CD4-positive, alpha-beta memory T cell (primary cell): ENCODE measurements at regions of chr22 and their contacts with region 1.

Region 1: GRCh38 chr22:50525390-50526068 is at the start of gene SCO2:
- DNase-seq: peak; percentile 96 to 98 (median 98)
- H3K4me3 ChIP-seq: peak within 1 kb of the TSS; percentile 47 to 81
- H3K4me3 Mint-ChIP-seq: peak within 1 kb of the TSS; percentile 86 to 94 (median 92)
- H3K27ac ChIP-seq: peak within 1 kb of the TSS; percentile 96
- H3K27ac Mint-ChIP-seq: peak within 1 kb of the TSS; percentile 84 to 97 (median 94)
- H3K4me1 ChIP-seq: peaks cover 48% of the 10 kb centered on the region
- H3K4me1 Mint-ChIP-seq: peaks cover 14 to 39% (median 26%) of the 10 kb centered on the region in 4 donors
- H3K27me3 ChIP-seq: no peaks in the 10 kb centered on the region
- H3K27me3 Mint-ChIP-seq: no peaks in the 10 kb centered on the region
- total RNA-seq, gene SCO2: not detected

Region 2: GRCh38 chr22:50244420-50245213 is 280.9 kb before region 1 on chr22 and contains the start of gene TUBGCP6:
- CTCF ChIA-PET with region 1: interaction called, 5 read pairs
- POLR2A ChIA-PET with region 1: interaction called, 20 read pairs
- intact Hi-C with region 1: loop called (anchors 5 kb)
- DNase-seq: peak; percentile 89 to 93 (median 91)
- H3K4me3 ChIP-seq: peak within 1 kb of the TSS; percentile 37 to 99
- H3K4me3 Mint-ChIP-seq: peak within 1 kb of the TSS; percentile 95 to 100 (median 98)
- H3K27ac ChIP-seq: peak within 1 kb of the TSS; percentile 98
- H3K27ac Mint-ChIP-seq: peak within 1 kb of the TSS; percentile 90 to 100 (median 99)
- H3K4me1 ChIP-seq: peaks cover 69% of the 10 kb centered on the region
- H3K4me1 Mint-ChIP-seq: peaks cover 23 to 64% (median 37%) of the 10 kb centered on the region in 4 donors
- H3K27me3 ChIP-seq: no peaks in the 10 kb centered on the region
- H3K27me3 Mint-ChIP-seq: no peaks in the 10 kb centered on the region
- total RNA-seq, gene TUBGCP6: 132 to 133 TPM

Region 3: GRCh38 chr22:50399751-50400331 is 125.7 kb before region 1 on chr22:
- CTCF ChIA-PET with region 1: interaction called, 12 read pairs
- POLR2A ChIA-PET with region 1: interaction called, 3 read pairs
- intact Hi-C with region 1: no loop called
- DNase-seq: peak in 2 of 5 donors; percentile 12 to 15
- H3K4me3 ChIP-seq: no peak overlapping the region
- H3K4me3 Mint-ChIP-seq: no peak overlapping the region
- H3K27ac ChIP-seq: no peak overlapping the region
- H3K27ac Mint-ChIP-seq: peak overlapping the region in 6 of 7 donors; percentile 57 to 84 (median 76)
- H3K4me1 ChIP-seq: peaks cover 7% of the 10 kb centered on the region
- H3K4me1 Mint-ChIP-seq: peaks cover 13 to 28% (median 18%) of the 10 kb centered on the region in 4 donors
- H3K27me3 ChIP-seq: no peaks in the 10 kb centered on the region
- H3K27me3 Mint-ChIP-seq: no peaks in the 10 kb centered on the region

Region 4: DNA sequence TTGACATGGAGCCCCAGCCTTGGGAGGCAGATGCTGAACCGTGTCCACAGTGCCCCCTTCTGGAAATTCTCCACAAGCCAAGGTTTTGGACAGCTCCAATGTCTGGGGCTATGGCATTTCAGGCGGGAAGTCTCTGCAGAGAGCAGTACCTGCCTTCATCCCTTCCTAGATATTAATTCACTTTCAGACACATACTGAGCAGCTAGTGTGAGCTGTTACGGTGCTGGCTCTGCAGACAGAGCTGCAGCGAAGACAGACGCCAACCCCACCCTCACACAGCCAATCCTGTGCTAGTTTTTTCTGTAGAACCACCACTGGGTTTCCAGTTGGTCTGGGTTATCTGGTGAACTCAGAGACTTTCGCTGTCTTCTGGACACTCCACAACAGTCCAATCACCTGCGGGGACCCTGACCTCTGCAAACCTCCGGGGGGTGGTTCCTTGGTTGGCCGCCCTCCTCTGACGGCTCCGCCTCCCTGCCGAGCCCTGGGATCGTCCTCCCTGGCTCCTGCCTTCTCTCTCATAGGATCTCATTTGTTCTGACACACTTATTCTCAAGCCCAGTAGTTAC is 27.1 kb before region 1 on chr22:
- CTCF ChIA-PET with region 1: interaction called, 12 read pairs
- POLR2A ChIA-PET with region 1: interaction called, 21 read pairs
- intact Hi-C with region 1: no loop called
- DNase-seq: peak; percentile 66 to 69 (median 68)
- H3K4me3 ChIP-seq: no peak overlapping the region
- H3K4me3 Mint-ChIP-seq: no peak overlapping the region
- H3K27ac ChIP-seq: no peak overlapping the region
- H3K27ac Mint-ChIP-seq: peak overlapping the region in 1 of 7 donors; percentile 30
- H3K4me1 ChIP-seq: peaks cover 3% of the 10 kb centered on the region
- H3K4me1 Mint-ChIP-seq: peaks cover 0 to 5% (median under 1%) of the 10 kb centered on the region in 4 donors
- H3K27me3 ChIP-seq: no peaks in the 10 kb centered on the region
- H3K27me3 Mint-ChIP-seq: no peaks in the 10 kb centered on the region

Region 5: DNA sequence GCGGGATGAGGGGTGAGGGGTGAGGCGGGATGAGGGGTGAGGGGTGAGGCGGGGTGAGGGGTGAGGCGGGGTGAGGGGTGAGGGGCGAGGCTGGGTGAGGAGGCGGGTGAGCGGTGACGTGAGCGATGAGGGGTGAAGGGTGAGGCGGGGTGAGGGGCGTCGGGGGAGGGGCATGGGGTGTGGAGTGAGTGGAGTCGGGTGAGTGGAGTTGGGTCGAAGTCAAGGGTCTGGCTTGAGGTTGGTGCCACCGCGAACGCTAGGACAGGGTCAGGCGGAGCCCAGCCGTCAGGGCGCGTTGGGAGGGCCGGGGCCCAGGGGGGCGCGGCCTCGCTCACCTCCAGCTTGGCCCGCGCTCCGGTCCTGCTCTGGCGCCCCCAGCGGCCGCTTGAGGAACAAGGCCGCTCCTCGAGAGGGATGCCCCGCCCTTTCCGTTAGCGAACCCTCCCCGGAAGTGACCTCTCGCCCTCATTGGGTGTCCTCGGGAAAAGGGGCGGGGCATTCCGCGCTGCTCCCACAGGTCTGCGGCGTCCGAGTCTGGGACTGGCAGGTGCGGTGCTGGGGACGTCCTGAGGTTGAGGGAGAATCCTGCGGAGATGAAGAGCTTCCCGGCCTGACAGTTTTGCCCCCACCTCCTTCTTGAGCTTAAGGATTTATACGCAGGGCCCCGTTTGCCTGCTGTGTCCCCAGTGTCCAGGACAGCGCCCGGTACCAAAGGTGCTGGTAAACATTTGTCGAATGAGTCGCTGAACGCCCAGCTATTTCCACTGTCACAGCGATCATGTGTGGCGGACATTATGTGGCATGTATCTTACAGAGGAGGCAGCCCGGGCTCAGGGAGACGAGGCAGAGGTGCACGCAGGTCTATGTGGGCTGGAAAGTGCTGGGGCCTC is 37.2 kb after region 1 on chr22 and contains the start of gene SYCE3:
- CTCF ChIA-PET with region 1: interaction called, 33 read pairs
- POLR2A ChIA-PET with region 1: interaction called, 56 read pairs
- intact Hi-C with region 1: loop called (anchors 1 kb)
- DNase-seq: peak; percentile 94 to 97 (median 95)
- H3K4me3 ChIP-seq: peak within 1 kb of the TSS; percentile 62 to 78
- H3K4me3 Mint-ChIP-seq: peak within 1 kb of the TSS; percentile 92 to 97 (median 95)
- H3K27ac ChIP-seq: peak within 1 kb of the TSS; percentile 55
- H3K27ac Mint-ChIP-seq: peak within 1 kb of the TSS; percentile 78 to 96 (median 91)
- H3K4me1 ChIP-seq: peaks cover 8% of the 10 kb centered on the region
- H3K4me1 Mint-ChIP-seq: peaks cover 13 to 25% (median 20%) of the 10 kb centered on the region in 4 donors
- H3K27me3 ChIP-seq: no peaks in the 10 kb centered on the region
- H3K27me3 Mint-ChIP-seq: peaks cover 0 to 2% of the 10 kb centered on the region in 2 donors
- total RNA-seq, gene SYCE3: not detected